Activated naive CD4-positive, alpha-beta T cell treated with anti-CD3 and anti-CD28 coated beads for 36 hours (primary cell): ENCODE measurements at regions of chr1 and their contacts with region 1.

Region 1: DNA sequence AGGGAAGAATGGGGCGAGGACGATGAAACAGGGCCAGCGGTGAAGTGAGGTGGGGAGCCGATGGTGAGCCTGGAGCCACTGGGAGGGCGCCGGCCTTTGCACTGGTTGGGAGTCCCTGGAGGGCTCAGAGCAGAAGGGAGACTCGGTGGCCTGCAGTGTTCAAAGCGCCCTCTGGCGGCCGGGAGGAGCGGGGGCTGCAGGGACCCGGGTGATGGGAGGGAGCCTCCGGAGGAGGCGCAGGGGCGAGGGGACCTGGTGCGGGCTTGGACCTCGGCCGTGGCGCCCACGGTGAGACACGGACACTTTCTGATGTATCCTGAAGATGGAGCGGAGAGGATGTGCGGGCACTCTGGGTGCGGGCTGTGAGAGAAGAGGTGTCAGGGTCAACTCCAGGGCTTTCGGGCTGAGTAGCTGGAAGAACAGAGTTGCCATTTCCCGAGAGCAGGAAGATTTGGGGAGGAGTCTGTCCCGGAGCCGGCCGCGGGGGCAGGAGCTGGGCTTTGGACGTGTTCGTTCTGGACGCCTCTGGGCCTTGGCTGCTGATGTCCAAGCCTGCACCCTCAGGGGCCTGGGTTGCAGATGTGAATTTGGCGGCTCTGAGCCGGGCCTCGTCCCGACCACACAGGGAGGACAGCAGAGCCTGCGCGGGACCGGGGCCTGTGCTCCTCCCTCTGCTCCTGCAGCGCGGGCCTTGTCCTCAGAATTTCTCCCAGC is 29.7 kb downstream of the HEYL start:
- DNase-seq: peak; percentile 72
- H3K4me3 Mint-ChIP-seq: no peak overlapping the region
- H3K27ac Mint-ChIP-seq: no peak overlapping the region
- H3K4me1 Mint-ChIP-seq: peaks cover 7% of the 10 kb centered on the region
- H3K27me3 Mint-ChIP-seq: peaks cover 3% of the 10 kb centered on the region

Region 2: DNA sequence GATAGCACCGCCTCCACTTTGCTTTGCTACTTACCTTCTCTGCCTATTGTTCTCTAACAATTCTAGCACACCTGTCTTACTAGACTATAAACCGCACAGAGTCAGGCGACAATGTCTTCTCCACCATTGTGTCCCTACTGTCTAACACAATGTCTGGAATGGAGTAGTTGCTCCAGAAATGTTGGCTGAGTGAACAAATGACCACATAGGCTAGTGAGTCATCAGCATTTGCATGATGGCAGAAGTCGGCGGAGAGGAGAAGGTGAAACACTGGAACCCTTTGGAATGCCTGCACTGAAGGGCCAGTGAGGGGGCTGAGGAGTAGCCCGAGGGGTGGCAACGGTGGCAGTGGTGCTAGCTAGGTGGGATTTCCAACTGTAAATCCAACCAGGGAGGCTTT is 19.2 kb before region 1 on chr1:
- CTCF ChIA-PET with region 1: interaction called, 11 read pairs
- intact Hi-C with region 1: no loop called
- DNase-seq: no peak
- H3K4me3 Mint-ChIP-seq: no peak overlapping the region
- H3K27ac Mint-ChIP-seq: no peak overlapping the region
- H3K4me1 Mint-ChIP-seq: no peaks in the 10 kb centered on the region
- H3K27me3 Mint-ChIP-seq: no peaks in the 10 kb centered on the region

Region 3: GRCh38 chr1:39646232-39647081 is 36.7 kb after region 1 on chr1:
- CTCF ChIA-PET with region 1: interaction called, 263 read pairs
- intact Hi-C with region 1: no loop called
- DNase-seq: no peak
- H3K4me3 Mint-ChIP-seq: no peak overlapping the region
- H3K27ac Mint-ChIP-seq: no peak overlapping the region
- H3K4me1 Mint-ChIP-seq: no peaks in the 10 kb centered on the region
- H3K27me3 Mint-ChIP-seq: no peaks in the 10 kb centered on the region

Region 4: DNA sequence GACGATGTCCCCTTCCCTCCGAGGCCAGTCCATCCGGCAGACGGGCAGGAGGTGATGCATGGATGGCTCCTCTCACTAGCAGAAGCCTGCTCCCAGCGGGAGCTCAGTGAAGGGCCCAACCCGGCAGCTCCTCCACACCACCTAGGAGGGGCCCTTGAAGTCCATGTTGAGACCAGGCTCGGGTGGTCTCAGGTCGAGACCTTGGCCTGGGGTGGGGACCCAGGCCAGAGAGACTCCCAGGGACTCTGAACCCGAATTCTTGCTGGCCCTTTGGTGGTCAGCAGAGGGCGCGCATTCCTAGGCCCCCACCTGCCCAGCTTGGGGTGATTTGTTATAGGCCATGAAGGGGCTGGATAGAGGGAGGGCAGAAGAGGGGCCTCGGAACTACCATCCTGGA is 62.8 kb after region 1 on chr1:
- CTCF ChIA-PET with region 1: interaction called, 11 read pairs
- intact Hi-C with region 1: no loop called
- DNase-seq: peak; percentile 54
- H3K4me3 Mint-ChIP-seq: peak overlapping the region; percentile 17
- H3K27ac Mint-ChIP-seq: no peak overlapping the region
- H3K4me1 Mint-ChIP-seq: peaks cover 6% of the 10 kb centered on the region
- H3K27me3 Mint-ChIP-seq: peaks cover 35% of the 10 kb centered on the region

Region 5: DNA sequence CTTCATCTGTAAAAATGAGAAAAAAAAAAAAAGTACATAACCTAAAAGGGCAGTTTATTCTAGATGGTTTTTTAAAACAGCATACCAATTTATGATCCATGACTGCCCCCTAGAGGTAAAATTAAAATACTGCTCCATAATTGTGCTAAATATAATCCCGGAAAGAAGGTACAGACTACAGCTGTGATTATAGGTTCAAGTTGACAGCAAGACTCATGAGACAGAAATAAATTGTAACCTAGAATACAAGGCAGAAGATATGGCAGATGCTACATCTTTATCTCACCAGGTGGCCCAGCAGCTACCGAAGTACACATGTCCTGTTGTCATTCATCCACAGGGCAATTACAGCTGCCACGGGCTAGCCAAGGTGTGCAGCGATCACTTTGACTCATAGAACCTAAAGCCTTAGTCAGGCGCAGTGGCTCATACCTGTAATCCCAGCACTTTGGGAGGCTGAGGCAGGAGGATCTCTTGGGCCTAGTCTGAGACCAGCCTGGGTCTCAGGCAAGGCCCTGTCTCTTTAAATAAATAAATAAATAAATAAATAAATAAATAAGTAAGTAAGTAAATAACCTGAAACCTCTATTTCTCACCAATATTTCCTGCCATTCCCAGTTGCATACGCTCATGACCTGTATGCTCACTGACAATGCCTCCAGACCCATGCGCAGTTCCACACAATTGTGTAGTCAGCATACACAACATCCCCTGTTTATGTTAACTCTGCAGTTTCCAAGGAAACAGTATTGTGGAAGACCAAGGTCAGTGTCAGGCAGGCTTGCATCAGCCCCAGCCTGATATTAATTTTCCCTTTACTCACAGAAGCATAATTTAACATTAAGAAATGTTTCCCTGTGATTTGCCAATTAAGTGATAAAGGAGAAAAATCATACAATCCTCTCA is 110.6 kb after region 1 on chr1:
- CTCF ChIA-PET with region 1: interaction called, 16 read pairs
- intact Hi-C with region 1: loop called (anchors 1 kb)
- DNase-seq: no peak
- H3K4me3 Mint-ChIP-seq: no peak overlapping the region
- H3K27ac Mint-ChIP-seq: no peak overlapping the region
- H3K4me1 Mint-ChIP-seq: no peaks in the 10 kb centered on the region
- H3K27me3 Mint-ChIP-seq: peaks cover 36% of the 10 kb centered on the region

Region 6: DNA sequence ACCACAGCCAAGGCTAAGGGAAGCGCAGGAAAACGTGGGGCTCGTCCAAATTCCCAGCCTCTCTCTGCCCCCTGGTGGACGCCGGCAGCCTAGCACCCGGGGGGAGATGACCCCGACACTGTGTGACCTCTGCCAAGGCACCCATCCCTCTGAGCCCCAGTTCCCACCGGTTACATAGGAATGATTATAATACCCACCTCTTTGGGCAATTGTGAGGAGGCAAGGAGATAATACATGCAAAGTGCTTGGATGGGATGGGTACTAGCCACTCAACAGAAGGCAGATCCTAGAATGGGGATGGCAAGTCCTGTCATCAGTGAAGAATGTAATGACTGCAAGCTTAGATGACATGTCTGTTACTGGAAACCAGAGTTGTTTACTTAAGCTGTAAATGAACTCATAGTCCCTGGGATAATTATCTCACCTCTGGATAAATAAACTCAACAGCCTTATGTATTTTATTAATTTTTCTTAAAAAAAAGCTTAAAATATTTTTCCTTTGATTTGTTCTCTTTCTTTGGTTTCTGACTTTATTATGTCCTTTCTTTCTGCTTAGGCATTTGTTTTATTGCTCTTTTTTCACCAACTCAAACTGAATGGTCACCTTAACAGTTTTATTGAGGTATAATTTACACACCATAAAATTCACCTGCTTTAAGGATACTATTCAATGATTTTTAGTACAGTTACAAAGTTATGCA is 190.1 kb after region 1 on chr1:
- CTCF ChIA-PET with region 1: interaction called, 6 read pairs
- intact Hi-C with region 1: loop called (anchors 1 kb)
- DNase-seq: peak; percentile 81
- H3K4me3 Mint-ChIP-seq: peak overlapping the region; percentile 61
- H3K27ac Mint-ChIP-seq: peak overlapping the region; percentile 54
- H3K4me1 Mint-ChIP-seq: peaks cover 13% of the 10 kb centered on the region
- H3K27me3 Mint-ChIP-seq: no peaks in the 10 kb centered on the region